Activated naive CD4-positive, alpha-beta T cell treated with anti-CD3 and anti-CD28 coated beads for 36 hours (primary cell): ENCODE measurements at regions of chr2 and their contacts with region 1.

Region 1: DNA sequence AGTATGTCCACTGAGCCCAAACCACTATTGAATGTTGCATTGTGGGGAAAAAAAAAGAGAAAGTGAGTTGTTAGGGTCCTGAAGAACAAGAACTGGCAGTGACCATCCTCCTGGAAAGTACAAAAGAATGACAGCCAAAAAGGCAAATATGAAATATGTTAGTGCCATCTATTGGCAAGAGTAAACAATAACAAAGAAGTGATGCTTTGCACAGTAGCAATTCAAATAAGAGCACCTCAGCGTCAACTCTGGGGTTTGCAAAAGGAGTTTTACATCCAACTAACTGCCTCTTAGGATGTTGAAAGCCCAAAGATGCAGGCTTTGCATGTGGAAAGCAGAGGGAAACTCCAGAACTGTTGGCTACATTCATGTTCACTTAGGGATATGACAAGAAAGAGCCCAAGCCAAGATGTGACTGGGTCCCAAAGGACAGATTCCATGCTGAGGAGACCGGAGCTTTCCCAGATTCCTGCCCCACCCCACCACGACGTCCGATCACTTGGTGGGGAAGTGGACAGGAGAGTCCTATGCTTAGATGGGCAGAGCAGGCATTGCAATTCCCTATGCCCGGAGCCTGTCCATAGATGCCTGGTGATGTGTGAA is 15.6 kb downstream of the TRABD2A start:
- DNase-seq: peak; percentile 25
- H3K4me3 Mint-ChIP-seq: no peak overlapping the region
- H3K27ac Mint-ChIP-seq: peak overlapping the region; percentile 77
- H3K4me1 Mint-ChIP-seq: peaks cover 87% of the 10 kb centered on the region
- H3K27me3 Mint-ChIP-seq: no peaks in the 10 kb centered on the region

Region 2: GRCh38 chr2:84022810-84023431 is 842.4 kb before region 1 on chr2:
- CTCF ChIA-PET with region 1: no interaction called
- intact Hi-C with region 1: loop called (anchors 5 kb)
- DNase-seq: peak; percentile 18
- H3K4me3 Mint-ChIP-seq: no peak overlapping the region
- H3K27ac Mint-ChIP-seq: no peak overlapping the region
- H3K4me1 Mint-ChIP-seq: no peaks in the 10 kb centered on the region
- H3K27me3 Mint-ChIP-seq: no peaks in the 10 kb centered on the region

Region 3: DNA sequence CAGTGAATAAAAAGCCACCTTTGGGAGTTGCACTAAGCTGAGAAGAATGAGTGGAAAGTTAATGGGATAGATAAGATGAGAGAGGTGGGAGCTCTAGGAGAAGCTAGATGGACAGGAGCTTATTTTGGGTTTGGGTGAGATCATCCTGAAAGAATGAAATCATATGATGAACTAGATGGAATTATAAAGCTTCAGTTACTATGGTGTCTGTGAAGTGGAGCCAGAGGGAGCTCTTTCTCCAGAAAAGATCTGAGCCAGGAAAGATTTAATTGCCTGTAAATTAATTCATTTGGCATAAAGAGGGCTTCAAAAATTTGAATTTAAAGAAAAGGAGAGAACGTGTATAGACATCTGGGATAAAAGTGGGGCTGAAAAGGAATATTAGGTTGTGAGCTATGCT is 338.7 kb before region 1 on chr2:
- CTCF ChIA-PET with region 1: interaction called, 3 read pairs
- intact Hi-C with region 1: loop called (anchors 1 kb)
- DNase-seq: no peak
- H3K4me3 Mint-ChIP-seq: no peak overlapping the region
- H3K27ac Mint-ChIP-seq: peak overlapping the region; percentile 50
- H3K4me1 Mint-ChIP-seq: peaks cover 17% of the 10 kb centered on the region
- H3K27me3 Mint-ChIP-seq: no peaks in the 10 kb centered on the region

Region 4: GRCh38 chr2:84649487-84650142 is 215.7 kb before region 1 on chr2:
- CTCF ChIA-PET with region 1: interaction called, 3 read pairs
- intact Hi-C with region 1: loop called (anchors 2 kb)
- DNase-seq: no peak
- H3K4me3 Mint-ChIP-seq: peak overlapping the region; percentile 0
- H3K27ac Mint-ChIP-seq: peak overlapping the region; percentile 60
- H3K4me1 Mint-ChIP-seq: peaks cover 75% of the 10 kb centered on the region
- H3K27me3 Mint-ChIP-seq: no peaks in the 10 kb centered on the region

Region 5: GRCh38 chr2:84817239-84817655 is 48.0 kb before region 1 on chr2:
- CTCF ChIA-PET with region 1: no interaction called
- intact Hi-C with region 1: loop called (anchors 2 kb)
- DNase-seq: peak; percentile 35
- H3K4me3 Mint-ChIP-seq: no peak overlapping the region
- H3K27ac Mint-ChIP-seq: peak overlapping the region; percentile 57
- H3K4me1 Mint-ChIP-seq: peaks cover 41% of the 10 kb centered on the region
- H3K27me3 Mint-ChIP-seq: no peaks in the 10 kb centered on the region

Region 6: GRCh38 chr2:84846041-84846663 is 19.1 kb before region 1 on chr2:
- CTCF ChIA-PET with region 1: interaction called, 16 read pairs
- intact Hi-C with region 1: no loop called
- DNase-seq: peak; percentile 66
- H3K4me3 Mint-ChIP-seq: peak overlapping the region; percentile 78
- H3K27ac Mint-ChIP-seq: peak overlapping the region; percentile 99
- H3K4me1 Mint-ChIP-seq: peaks cover 95% of the 10 kb centered on the region
- H3K27me3 Mint-ChIP-seq: no peaks in the 10 kb centered on the region

Region 7: DNA sequence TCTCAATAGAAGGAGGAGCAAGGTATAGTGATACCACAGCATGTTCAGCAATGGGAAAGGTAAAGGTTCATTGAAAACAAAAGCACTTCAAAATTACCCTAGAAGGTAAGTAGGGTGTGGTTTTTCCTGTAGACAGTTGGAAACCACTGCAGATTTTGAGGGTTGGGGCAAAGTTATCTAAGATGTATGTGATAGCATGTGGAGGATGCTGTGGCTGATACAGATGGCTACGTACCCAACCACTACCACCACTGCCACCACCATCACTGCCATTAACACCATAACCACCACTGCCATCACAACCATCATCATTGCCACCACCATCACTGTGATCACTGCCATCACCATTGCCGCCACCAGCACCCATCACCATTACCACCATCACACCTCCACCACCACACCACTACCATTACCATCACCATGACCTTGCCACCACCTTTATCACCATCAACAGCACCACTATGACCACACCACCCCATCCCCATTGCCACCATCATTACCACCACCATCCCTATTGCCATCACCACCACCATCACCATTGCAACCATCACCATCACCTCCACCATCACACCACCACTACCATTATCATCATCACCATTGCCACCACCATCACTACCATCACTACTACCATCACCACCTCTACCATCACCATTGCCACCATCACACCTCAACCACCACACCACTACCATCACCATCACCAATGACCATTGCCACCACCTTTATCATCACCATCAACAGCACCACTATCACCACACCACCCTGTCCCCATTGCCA is 43.9 kb after region 1 on chr2:
- CTCF ChIA-PET with region 1: no interaction called
- intact Hi-C with region 1: no loop called
- DNase-seq: peak; percentile 36
- H3K4me3 Mint-ChIP-seq: no peak overlapping the region
- H3K27ac Mint-ChIP-seq: peak overlapping the region; percentile 81
- H3K4me1 Mint-ChIP-seq: peaks cover 41% of the 10 kb centered on the region
- H3K27me3 Mint-ChIP-seq: no peaks in the 10 kb centered on the region